ENCODE measurements at regions of chr1 and their contacts with region 1.

Region 1: GRCh38 chr1:160006312-160006940 is 25.4 kb downstream of the PIGM start:
- DNase-seq: peak; percentile 69 to 88 (median 85)
- ATAC-seq: peak; percentile 86
- H3K4me3 ChIP-seq: no peak overlapping the region
- H3K4me1 ChIP-seq: no peaks in the 10 kb centered on the region
- CTCF ChIP-seq: peak; percentile 84

Region 2: DNA sequence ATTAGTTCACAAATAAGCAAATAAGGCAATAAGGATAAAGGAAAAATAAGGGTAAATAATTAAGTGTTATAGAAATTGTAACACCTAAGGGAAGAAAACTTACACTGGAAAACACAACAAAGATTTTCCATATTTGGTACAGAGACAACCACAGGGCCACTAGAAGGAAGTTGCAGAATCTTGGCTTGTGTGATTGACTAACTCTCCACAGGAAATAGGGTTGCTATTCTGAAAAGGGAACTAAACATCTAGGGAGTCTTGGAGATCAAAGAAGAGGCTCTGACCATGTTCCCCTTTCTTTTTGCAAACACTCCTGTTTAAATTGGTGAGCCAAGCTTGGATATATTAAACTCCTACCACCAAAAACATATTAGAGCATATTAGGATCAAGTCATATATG is 359.7 kb before region 1 on chr1:
- intact Hi-C with region 1: no loop called
- DNase-seq: no peak
- ATAC-seq: peak; percentile 34
- H3K4me3 ChIP-seq: no peak overlapping the region
- H3K4me1 ChIP-seq: no peaks in the 10 kb centered on the region
- CTCF ChIP-seq: no peak

Region 3: GRCh38 chr1:159936273-159936904 is 70.0 kb before region 1 on chr1:
- intact Hi-C with region 1: loop called (anchors 2 to 5 kb)
- DNase-seq: peak; percentile 84 to 95 (median 93)
- ATAC-seq: peak; percentile 90
- H3K4me3 ChIP-seq: no peak overlapping the region
- H3K4me1 ChIP-seq: peaks cover 44% of the 10 kb centered on the region
- CTCF ChIP-seq: peak; percentile 98

Region 4: DNA sequence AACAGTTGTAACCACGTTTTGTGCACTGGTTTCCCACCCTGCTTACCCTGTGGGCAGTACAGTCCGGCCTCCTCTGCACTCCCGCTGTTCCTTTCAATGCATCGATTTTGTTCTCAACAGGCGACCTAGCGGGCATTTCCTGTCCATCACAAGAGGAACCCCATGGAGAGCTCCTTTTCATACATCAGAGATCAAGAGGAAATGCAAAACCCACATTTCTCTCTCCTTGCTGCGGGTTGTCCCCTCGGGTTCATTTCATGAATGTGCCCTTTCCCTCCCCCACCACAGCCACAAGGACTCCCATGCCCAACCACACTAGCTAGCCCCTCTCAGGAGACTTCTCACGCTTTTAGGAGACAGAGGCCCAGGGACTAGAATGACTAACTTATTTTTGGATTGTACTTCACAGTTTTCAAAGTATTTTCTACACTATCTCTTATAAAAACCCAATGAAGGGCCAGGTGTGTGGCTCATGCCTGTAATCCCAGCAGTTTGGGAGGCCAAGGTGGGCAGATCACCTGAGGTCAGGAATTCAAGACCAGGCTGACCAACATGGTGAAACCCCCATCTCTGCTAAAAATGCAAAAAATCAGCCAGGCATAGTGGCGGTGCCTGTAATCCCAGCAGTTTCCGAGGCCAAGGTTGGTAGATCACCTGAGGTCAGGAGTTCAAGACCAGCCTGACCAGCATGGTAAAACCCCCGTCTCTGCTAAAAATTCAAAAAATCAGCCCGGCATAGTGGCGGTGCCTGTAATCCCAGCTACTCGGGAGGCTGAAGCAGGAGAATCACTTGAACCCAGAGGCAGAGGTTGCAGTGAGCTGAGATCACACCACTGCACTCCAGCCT is 163.3 kb after region 1 on chr1:
- intact Hi-C with region 1: no loop called
- DNase-seq: no peak
- ATAC-seq: no peak
- H3K4me3 ChIP-seq: no peak overlapping the region
- H3K4me1 ChIP-seq: no peaks in the 10 kb centered on the region
- CTCF ChIP-seq: no peak